PC-9 (cell line): ENCODE measurements at regions of chr11 and their contacts with region 1.

Region 1: GRCh38 chr11:13942983-13943382 is 19.5 kb upstream of the SPON1 start:
- DNase-seq: peak; percentile 42 to 72
- H3K4me3 ChIP-seq: no peak overlapping the region
- H3K27ac ChIP-seq: peak overlapping the region; percentile 84
- H3K4me1 ChIP-seq: peaks cover 48% of the 10 kb centered on the region
- H3K27me3 ChIP-seq: no peaks in the 10 kb centered on the region
- CTCF ChIP-seq: no peak

Region 2: DNA sequence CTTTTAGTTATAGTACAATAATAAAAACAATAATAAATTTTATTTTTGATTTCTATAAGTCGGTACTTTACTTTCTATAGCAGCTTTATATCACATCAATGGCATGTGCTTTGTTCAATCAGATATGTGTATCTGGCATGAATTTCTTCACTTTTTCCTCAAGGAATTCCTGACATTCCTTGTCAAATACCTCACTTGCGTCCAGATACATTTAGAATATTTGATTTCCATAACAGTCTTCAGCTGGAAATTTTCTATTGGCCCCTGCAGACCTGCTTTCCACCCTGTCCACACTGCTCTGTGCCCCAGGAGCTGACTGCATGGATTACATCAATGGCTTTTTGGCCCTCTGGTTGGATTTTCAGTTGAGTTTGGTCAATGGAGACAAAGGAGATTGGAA is 181.3 kb before region 1 on chr11:
- CTCF ChIA-PET with region 1: no interaction called
- POLR2A ChIA-PET with region 1: no interaction called
- intact Hi-C with region 1: no loop called
- DNase-seq: no peak
- H3K4me3 ChIP-seq: no peak overlapping the region
- H3K27ac ChIP-seq: no peak overlapping the region
- H3K4me1 ChIP-seq: no peaks in the 10 kb centered on the region
- H3K27me3 ChIP-seq: no peaks in the 10 kb centered on the region
- CTCF ChIP-seq: no peak

Region 3: DNA sequence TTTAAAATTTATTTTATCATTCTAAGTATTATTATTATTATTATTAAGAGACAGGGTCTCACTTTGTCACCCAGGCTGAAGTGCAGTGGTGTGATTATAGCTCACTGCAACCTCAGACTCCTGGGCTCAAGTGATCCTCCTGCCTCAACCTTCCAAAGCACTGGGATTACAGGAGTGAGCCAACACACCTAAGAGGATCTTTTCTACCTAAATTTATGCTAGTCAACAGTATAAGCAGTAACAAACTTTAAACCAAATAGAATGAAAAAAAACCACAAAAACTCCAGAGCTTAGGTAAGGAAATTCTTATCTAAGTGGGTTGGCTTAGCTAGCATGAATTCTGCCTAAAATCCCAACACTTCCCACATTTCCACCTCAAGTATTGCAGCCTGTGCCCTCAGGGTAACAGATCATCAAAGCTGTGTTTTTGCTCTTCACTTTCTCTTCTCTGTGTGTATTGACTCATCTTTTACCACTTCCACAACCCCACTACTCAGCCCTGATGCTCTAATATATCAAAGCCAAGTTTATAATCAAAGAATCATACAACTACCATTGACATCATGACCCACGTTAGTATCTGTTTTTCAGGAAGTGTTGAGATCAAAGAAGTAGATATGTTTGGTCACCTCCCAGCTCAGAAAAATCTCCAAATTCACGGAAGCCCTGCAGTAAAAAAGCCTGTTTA is 74.1 kb before region 1 on chr11:
- CTCF ChIA-PET with region 1: no interaction called
- POLR2A ChIA-PET with region 1: no interaction called
- intact Hi-C with region 1: loop called (anchors 1 kb)
- DNase-seq: no peak
- H3K4me3 ChIP-seq: no peak overlapping the region
- H3K27ac ChIP-seq: no peak overlapping the region
- H3K4me1 ChIP-seq: peaks cover 18% of the 10 kb centered on the region
- H3K27me3 ChIP-seq: no peaks in the 10 kb centered on the region
- CTCF ChIP-seq: no peak

Region 4: DNA sequence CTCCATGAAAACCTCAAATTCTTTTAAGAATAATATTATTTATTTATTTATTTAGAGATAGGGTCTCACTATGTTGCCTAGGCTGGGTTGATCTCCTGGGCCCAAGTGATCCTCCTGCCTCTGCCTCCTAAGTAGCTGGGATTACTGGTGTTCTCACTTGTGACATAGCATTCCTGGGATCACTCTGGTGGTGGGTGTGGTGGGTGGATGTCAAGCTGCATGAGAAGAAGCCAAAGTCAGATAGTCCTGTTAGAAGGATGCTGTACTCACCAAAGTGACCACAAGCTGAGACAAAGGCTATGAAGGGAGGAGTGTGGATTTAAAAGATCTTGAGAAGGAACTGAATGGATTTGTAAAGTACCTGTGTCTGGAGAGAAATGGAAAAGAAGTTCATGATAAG is 68.4 kb before region 1 on chr11:
- CTCF ChIA-PET with region 1: no interaction called
- POLR2A ChIA-PET with region 1: interaction called, 13 read pairs
- intact Hi-C with region 1: loop called (anchors 1 kb)
- DNase-seq: no peak
- H3K4me3 ChIP-seq: no peak overlapping the region
- H3K27ac ChIP-seq: no peak overlapping the region
- H3K4me1 ChIP-seq: peaks cover 10% of the 10 kb centered on the region
- H3K27me3 ChIP-seq: no peaks in the 10 kb centered on the region
- CTCF ChIP-seq: no peak

Region 5: DNA sequence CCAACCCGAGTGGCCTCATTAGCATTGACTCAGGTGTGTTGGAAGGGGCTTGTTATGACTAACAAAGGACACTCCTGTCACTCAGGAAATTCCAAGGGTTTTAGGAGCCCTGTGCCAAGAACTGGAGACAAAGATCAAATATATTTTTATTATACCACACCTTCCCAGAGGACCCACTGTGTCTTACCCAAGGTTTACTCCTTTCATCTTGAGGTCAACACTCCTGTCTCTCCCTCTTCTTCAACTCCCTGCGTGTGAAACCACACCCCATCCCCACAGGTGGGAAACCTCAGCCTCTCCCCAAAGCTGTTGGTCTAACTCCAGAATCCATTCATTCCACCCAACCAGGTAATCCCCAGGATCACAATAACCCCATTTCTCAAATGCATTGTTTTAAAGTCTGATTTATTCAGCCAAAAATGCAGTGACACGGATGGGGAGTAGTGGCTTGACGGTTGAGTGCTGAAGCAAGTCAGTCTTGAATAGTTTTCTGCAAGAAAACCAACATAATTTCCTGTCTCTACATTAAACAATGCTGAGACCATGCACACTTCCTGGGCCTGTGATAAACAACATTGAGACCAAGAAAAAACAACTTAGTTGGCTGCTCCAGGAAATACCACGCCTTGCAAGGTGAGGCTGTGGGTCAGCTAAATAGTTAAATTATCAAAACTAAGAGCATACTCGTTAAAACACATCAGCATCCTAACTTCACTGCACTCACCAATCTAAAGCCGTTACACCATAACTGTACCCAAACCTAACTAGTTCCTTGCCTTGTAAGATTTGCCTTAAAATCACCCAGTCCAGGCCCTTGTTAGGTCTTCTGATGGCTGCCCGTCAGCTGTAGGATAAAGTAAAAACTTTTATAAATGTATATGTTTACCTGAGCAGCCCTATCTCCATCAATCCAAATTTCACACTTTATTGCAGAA is 19.0 kb before region 1 on chr11:
- CTCF ChIA-PET with region 1: no interaction called
- POLR2A ChIA-PET with region 1: interaction called, 6 read pairs
- intact Hi-C with region 1: loop called (anchors 1 kb)
- DNase-seq: peak; percentile 60 to 75
- H3K4me3 ChIP-seq: peak overlapping the region; percentile 21; the same call in 1 of the 2 replicates
- H3K27ac ChIP-seq: peak overlapping the region; percentile 76
- H3K4me1 ChIP-seq: peaks cover 46% of the 10 kb centered on the region
- H3K27me3 ChIP-seq: no peaks in the 10 kb centered on the region
- CTCF ChIP-seq: no peak

Region 6: GRCh38 chr11:13970986-13971385 is 28.0 kb after region 1 on chr11:
- CTCF ChIA-PET with region 1: no interaction called
- POLR2A ChIA-PET with region 1: no interaction called
- intact Hi-C with region 1: no loop called
- DNase-seq: peak; percentile 45 to 72
- H3K4me3 ChIP-seq: no peak overlapping the region
- H3K27ac ChIP-seq: peak overlapping the region; percentile 17; the same call in 1 of the 2 replicates
- H3K4me1 ChIP-seq: peaks cover 12% of the 10 kb centered on the region
- H3K27me3 ChIP-seq: no peaks in the 10 kb centered on the region
- CTCF ChIP-seq: peak; percentile 71